ENCODE measurements at regions of chr2 and their contacts with region 1.

Region 1: DNA sequence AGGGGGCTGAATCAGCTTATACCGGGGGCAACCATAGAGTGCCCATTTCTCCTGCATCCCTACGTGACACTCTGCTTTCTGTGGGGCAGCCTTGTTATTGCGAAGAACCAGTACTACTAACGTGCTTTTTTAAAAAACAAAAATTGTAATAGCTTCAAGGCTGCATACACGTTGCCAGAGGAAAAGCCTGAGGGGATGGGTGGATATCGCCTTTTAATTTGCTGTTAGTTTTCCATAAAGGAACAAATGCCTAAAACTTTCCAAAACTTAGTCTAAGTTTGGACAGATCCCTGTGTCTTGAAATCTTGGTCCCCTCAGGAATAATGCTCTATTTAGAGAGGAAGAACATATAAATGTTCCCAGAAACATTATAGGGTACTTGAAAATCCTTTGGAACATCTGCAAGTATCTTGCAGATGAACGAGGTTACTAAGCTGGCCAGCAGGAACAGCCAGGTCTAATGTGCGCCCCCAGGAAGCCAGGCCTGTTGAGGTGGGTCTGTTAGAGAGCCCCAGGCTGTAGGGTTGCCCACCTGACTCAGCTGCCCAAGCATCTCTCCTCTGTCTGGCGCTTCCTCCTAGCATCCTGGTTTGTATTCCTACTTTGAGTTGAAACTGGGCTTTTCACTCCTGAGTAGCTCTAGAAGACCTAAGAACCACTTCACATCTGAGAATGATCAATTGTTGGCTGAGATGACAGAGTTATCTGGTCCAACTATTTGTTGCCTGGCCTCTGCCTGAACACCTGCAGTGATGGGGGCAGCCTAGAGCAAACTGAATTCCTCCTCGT is 96.9 kb downstream of the TGOLN2 start:
- DNase-seq: no peak
- H3K4me3 ChIP-seq: peak overlapping the region in 1 of 4 experiments; percentile 35; a peak in 1 of 8 replicates
- H3K27ac ChIP-seq: peak overlapping the region; percentile 42; the same call in 1 of the 2 replicates
- H3K4me1 ChIP-seq: peaks cover 26 to 45% (median 35%) of the 10 kb centered on the region in 4 experiments
- H3K27me3 ChIP-seq: no peaks in the 10 kb centered on the region
- CTCF ChIP-seq: peak in 2 of 3 experiments; percentile 32 to 62; a peak in 3 of 4 replicates
- EP300 ChIP-seq: no peak
- POLR2A ChIP-seq: no peak
- RAD21 ChIP-seq: no peak

Region 2: DNA sequence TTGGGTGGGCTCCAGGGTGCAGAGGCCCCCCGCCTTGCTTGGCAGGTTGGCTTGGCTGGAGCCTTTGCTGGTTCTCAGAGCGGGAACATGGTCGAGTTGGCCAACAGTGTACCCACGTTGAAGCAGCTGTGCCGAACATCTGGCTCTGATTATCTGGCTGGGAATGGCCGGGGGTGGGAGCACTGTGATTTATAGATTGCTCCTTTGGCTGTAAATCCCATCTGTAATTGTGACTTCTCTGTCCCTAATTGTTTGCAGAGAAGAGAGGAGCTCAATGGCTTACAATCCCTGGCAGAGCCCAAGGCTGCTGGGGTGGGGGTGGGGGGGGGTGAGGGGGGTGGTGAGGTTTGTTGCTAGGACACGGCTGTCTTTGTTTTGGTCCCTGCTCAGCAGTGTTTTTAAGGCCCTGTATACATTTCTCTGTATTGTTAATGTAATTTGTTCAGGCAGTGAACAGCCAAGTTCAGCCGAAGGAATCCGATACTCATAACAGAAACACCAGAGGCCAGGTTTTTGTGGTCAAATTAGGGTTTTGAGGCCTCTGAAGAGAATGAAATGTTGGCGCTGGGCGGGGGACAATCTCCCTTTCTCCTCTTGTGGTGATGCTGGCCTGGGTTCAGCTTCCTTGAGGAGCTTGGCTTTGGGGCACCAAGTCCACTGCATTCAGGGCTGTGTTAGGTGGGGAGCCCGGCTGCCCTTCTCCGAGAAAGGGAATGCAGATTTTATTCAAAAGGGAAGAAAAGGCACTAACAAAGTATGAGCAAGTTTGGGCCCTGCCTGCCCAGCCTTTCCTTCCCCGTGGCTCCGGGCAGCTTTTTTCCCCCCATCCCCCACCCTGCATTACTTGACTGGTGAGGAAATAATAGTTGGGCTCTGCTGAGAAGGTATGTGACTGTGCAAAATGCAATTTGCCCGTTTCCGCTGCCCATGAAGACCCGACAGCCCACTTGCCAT is 15.1 kb before region 1 on chr2:
- CTCF ChIA-PET with region 1: interaction called, 38 read pairs
- POLR2A ChIA-PET with region 1: interaction called, 23 read pairs
- DNase-seq: no peak
- H3K4me3 ChIP-seq: peak overlapping the region in 1 of 4 experiments; percentile 39; a peak in 2 of 8 replicates
- H3K27ac ChIP-seq: peak overlapping the region; percentile 62
- H3K4me1 ChIP-seq: peaks cover 22 to 41% (median 27%) of the 10 kb centered on the region in 4 experiments
- H3K27me3 ChIP-seq: no peaks in the 10 kb centered on the region
- CTCF ChIP-seq: no peak
- EP300 ChIP-seq: 0 out of 3 replicates have a peak, but pooled peaks of 1 of the 2 experiments have one; percentile 42
- POLR2A ChIP-seq: no peak
- RAD21 ChIP-seq: no peak

Region 3: DNA sequence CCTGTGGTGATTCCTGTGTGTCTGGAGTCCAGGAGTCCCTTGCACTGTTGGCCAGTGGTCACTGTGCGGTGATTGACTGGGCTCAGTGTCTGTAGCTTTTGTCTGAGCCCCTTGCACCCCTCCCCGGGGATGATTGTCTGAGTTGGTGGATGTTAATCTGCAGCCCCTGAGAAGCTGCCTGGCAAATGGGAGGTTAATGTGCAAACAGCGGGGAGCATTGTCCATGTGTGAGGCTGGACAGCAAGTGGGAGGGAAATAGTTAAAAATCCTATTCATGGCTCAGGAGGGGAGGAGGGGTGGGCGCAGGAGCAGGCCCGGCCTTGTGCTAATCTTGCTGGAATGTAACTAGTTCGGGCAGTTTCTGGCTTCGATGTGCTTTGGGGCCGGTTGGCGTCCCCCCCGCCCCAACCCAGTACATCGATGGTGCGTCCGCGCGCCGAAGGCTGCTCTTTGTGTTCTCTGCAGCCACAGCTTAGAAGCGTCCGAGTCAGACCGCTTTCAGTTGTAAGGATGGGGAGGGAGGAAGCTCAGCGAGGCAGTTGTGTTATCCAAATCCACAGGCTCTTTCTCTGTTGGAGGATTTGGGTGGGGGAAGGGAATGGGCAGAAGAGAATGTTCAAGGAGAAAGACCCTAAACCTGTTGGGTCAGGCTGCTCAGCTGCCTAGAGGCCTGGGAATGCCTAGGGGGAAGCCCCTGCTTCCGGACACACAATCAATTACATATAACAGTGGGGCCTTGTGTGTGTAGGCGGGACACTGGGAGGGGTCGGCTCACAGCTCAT is 25.1 kb after region 1 on chr2:
- CTCF ChIA-PET with region 1: interaction called, 30 read pairs
- POLR2A ChIA-PET with region 1: interaction called, 60 read pairs
- DNase-seq: peak in 1 of 2 experiments; percentile 81
- H3K4me3 ChIP-seq: peak overlapping the region; percentile 1 to 48 (median 30); a peak in 7 of 8 replicates
- H3K27ac ChIP-seq: peak overlapping the region; percentile 97
- H3K4me1 ChIP-seq: peaks cover 43 to 65% (median 57%) of the 10 kb centered on the region in 4 experiments
- H3K27me3 ChIP-seq: no peaks in the 10 kb centered on the region
- CTCF ChIP-seq: no peak
- EP300 ChIP-seq: peak in 1 of 2 experiments; percentile 72; a peak in 1 of 3 replicates
- POLR2A ChIP-seq: peak; percentile 37 to 69
- RAD21 ChIP-seq: peak in 1 of 2 experiments; percentile 27; a peak in 2 of 4 replicates

Region 4: DNA sequence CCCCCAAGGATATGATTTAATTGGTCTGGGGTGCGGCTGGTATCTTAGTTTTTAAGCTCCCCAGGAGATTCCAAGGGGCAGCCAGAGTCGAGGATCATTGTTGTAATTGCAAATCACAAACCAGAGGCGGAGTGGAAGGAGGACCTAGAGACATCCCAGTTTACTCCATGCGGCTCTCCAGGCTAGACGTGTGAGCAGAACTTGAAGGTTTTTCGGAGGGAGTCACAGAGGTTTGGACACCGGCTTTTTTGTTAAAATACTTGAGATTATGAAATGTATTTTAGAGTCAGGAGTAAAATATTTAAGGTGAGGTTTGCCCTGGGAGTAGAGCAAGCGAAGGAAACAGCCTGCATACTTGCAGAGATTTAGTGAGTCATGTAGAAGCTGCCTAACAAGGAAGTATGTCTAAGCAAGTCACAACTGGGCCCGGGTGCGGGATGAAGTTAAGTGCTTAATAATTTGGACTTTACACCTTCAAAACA is 57.4 kb after region 1 on chr2:
- CTCF ChIA-PET with region 1: interaction called, 12 read pairs
- POLR2A ChIA-PET with region 1: no interaction called
- DNase-seq: no peak
- H3K4me3 ChIP-seq: no peak overlapping the region
- H3K27ac ChIP-seq: no peak overlapping the region
- H3K4me1 ChIP-seq: peaks cover 0 to 14% (median under 1%) of the 10 kb centered on the region in 4 experiments; a peak in 2 of 7 replicates
- H3K27me3 ChIP-seq: no peaks in the 10 kb centered on the region
- CTCF ChIP-seq: no peak
- EP300 ChIP-seq: no peak
- POLR2A ChIP-seq: no peak
- RAD21 ChIP-seq: no peak

Measured in H1 (cell line).